ENCODE measurements at regions of chrX and their contacts with region 1.

Region 1: DNA sequence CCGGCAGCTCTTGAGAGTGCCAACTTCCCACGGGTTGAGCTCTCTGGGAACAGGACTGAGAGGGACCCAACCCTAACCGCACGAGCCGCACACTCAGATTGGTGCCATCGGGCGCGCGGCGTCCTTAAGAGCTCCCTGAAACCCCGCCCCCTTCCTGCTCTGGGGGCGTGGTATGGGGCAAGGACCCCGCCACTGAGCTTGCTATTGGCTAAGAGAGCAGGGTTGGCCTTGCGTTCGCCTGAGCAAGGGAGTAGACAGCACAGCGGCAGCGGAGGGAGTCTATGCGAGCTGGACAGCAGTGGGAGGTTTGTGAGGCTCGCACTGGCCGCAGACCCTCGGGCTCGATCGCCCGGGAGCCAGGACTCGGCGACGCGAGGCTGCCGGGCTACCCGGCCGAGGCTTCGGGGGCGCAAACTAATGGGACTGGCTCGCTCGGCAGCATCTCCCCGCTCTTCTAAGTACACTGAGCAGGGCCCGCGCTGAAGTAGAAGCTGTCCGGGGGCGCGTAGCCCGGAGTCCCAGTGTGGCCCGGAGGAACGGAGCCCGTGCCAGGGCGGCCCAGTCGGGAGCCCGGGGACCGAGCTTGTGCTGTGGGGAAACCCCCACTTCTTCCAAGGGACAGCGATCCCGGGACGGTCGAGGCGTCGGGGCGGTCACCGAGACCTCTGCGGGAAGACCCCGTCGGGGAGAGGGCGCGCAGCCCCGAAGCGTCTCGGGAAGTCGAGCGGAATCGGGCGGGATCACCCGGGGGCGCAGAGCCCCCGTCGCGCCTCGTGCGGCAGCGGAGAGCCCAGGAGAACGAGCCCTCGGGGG is at the start of gene EFNB1:
- DNase-seq: peak; percentile 89 to 95 (median 93)
- ATAC-seq: peak; percentile 97
- H3K4me3 ChIP-seq: peak within 1 kb of the TSS; percentile 28 to 46
- H3K27ac ChIP-seq: peak within 1 kb of the TSS; percentile 6 to 74 (median 44)
- H3K4me1 ChIP-seq: peaks cover 7% of the 10 kb centered on the region
- H3K27me3 ChIP-seq: no peaks in the 10 kb centered on the region
- CTCF ChIP-seq: peak in 1 of 7 experiments; percentile 3
- POLR2A ChIP-seq: peak; percentile 92
- total RNA-seq, gene EFNB1: 10.9 to 12.5 TPM

Region 2: GRCh38 chrX:69060631-69061408 is 231.9 kb after region 1 on chrX:
- intact Hi-C with region 1: loop called (anchors 5 kb)
- DNase-seq: peak; percentile 27 to 56 (median 40)
- ATAC-seq: peak; percentile 40
- H3K4me3 ChIP-seq: no peak overlapping the region
- H3K27ac ChIP-seq: no peak overlapping the region
- H3K4me1 ChIP-seq: no peaks in the 10 kb centered on the region
- H3K27me3 ChIP-seq: no peaks in the 10 kb centered on the region
- CTCF ChIP-seq: peak; percentile 17 to 56 (median 48)
- POLR2A ChIP-seq: no peak

Region 3: DNA sequence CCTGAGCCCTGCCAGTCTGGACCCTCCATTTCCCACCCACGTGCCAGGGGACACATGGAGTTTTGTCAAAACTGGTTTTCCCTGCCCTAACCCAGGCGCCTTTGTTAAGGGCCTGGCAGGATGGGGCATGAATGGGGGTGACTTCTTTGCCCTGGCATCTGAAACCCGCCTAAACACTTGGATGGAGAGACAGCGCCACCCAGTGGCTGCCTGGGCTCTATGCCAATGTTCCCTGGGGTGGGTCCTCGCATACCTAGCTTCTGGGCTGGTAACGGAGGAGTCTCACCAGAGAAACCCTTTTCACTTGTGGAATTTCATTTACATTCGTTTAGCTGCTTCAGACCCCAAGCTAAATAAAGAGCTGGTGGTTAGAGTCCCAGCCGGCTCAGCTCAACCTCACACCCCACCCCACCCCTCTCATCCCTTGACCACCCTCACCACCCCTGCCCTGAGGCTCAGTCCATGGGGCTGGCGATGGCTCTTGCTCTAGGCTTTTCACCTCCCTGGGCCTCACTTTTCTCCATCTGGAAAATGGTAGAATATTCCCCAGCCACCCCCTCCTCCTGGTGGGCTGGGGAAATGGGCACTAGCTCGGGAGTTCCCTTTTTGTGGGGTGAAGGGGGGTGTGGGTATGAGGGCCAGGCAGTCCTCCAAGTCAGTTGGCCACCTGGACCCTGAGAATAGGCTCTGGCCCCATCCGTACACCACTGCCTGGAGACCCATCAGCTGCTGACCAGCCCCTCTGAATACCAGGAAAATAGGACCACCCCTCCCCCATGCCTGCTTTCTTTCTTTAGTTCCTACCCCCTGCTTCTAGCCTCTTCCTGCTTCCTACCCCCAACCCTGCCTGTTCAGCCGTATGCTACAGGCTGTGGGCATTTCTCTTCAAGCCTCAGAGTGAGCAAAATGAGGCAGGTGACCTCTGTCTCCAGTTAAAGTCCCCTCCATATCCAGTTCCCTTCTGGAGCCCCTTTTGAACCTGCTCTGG is 393.5 kb after region 1 on chrX:
- intact Hi-C with region 1: loop called (anchors 10 kb)
- DNase-seq: peak; percentile 63 to 72 (median 65)
- ATAC-seq: peak; percentile 67
- H3K4me3 ChIP-seq: no peak overlapping the region
- H3K27ac ChIP-seq: no peak overlapping the region
- H3K4me1 ChIP-seq: no peaks in the 10 kb centered on the region
- H3K27me3 ChIP-seq: no peaks in the 10 kb centered on the region
- CTCF ChIP-seq: peak; percentile 45 to 68 (median 64)
- POLR2A ChIP-seq: no peak

Region 4: GRCh38 chrX:69285881-69286564 is 457.1 kb after region 1 on chrX:
- intact Hi-C with region 1: loop called (anchors 5 kb)
- DNase-seq: peak; percentile 40 to 73 (median 58)
- ATAC-seq: peak; percentile 71
- H3K4me3 ChIP-seq: no peak overlapping the region
- H3K27ac ChIP-seq: no peak overlapping the region
- H3K4me1 ChIP-seq: peaks cover 10% of the 10 kb centered on the region
- H3K27me3 ChIP-seq: no peaks in the 10 kb centered on the region
- CTCF ChIP-seq: peak; percentile 62 to 90 (median 73)
- POLR2A ChIP-seq: no peak